ENCODE measurements at regions of chr16 and their contacts with region 1.

Region 1: GRCh38 chr16:66483689-66484481 is 56.8 kb downstream of the BEAN1 start:
- DNase-seq: peak; percentile 42 to 56
- ATAC-seq: peak; percentile 34 to 61
- H3K4me3 ChIP-seq: no peak overlapping the region
- H3K27ac ChIP-seq: no peak overlapping the region
- H3K4me1 ChIP-seq: peaks cover 0 to 2% of the 10 kb centered on the region in 2 donors
- H3K27me3 ChIP-seq: no peaks in the 10 kb centered on the region
- CTCF ChIP-seq: peak; percentile 78 to 95 (median 83)
- POLR2A ChIP-seq: no peak

Region 2: GRCh38 chr16:66058172-66058691 is 425.7 kb before region 1 on chr16:
- in situ Hi-C with region 1: no loop called
- intact Hi-C with region 1: no loop called
- DNase-seq: no peak
- ATAC-seq: no peak
- H3K4me3 ChIP-seq: no peak overlapping the region
- H3K27ac ChIP-seq: no peak overlapping the region
- H3K4me1 ChIP-seq: no peaks in the 10 kb centered on the region
- H3K27me3 ChIP-seq: no peaks in the 10 kb centered on the region
- CTCF ChIP-seq: no peak
- POLR2A ChIP-seq: no peak

Region 3: DNA sequence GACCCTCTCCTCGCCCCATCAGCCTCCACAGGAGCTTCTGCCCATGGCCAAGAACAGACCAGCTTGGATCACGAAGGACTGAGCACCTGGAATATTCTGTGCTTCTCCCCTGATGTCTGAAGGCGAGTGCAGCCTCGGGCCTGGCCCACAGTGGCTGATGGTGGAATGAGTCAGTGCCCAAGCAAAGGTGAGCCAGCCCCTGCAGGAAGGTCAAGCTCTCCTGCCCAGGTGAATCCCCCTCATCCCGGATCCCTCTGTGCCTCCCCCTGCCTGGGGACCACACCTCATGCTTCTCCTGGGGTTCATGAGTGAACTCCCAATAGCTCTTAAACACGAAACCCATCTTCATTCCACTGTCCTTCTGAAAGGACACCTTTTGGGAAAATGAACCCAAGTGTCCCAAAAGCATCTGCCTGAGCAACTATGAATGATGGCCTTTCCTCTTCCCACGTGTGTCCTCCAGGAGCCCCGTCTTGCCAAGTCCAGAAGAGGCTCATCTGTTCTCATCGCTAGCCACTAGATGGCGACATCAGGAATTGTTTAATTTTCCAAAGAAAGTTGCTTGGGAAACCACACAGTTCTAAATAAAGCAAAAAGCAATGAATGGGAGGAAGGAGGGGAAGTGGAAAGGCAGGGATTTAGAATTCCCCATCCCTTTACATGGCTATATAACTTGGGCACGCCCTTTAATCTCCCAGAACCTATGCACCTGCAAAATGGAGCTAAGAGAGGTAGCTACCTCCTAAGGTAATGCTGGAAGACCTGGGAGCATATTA is 126.5 kb before region 1 on chr16:
- in situ Hi-C with region 1: no loop called
- intact Hi-C with region 1: loop called (anchors 2 kb)
- DNase-seq: peak in 1 of 2 donors; percentile 20
- ATAC-seq: peak; percentile 27 to 45
- H3K4me3 ChIP-seq: no peak overlapping the region
- H3K27ac ChIP-seq: peak overlapping the region in 1 of 4 donors; percentile 22
- H3K4me1 ChIP-seq: peaks cover 0 to 3% of the 10 kb centered on the region in 2 donors
- H3K27me3 ChIP-seq: peaks cover 0 to 6% (median 0%) of the 10 kb centered on the region in 3 donors
- CTCF ChIP-seq: peak in 4 of 5 experiments; percentile 35 to 68 (median 54)
- POLR2A ChIP-seq: no peak

Region 4: DNA sequence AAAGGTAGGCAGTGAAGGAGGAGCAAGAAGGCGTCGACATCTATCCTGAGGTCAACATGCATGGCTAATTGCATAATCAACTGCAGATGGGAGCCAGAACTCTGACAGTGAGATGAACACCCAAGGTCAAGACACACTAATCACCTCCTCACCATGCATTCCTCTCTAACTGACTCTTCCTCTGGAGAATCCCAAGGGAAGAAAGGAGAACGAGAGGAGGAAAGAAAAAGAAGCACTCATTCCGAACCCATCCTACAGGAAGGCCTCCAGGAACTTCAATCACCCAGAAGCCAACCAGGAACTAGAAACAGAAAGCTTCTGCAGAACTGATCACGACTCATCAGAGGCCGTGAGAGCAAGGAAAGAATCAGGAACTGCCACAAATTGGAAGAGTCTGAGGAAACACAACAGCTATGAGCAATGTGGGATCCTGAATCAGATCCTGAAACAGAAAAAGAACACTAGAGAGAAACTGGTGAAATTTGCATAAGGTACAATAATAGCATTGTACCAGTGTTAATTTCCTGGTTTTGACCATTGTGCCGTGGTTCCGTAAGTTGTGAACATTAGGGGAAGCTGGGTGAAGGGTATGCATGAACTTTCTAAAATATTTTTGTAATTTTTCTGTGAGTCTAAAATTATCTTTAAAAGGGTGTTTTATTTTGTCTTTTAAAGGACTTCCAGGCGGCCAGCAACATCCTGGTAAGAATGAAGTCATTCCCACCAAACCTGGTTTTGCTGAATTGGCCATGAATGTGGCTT is 66.8 kb before region 1 on chr16:
- in situ Hi-C with region 1: loop called in 2 of 4 experiments (anchors 5 to 10 kb)
- intact Hi-C with region 1: no loop called
- DNase-seq: no peak
- ATAC-seq: no peak
- H3K4me3 ChIP-seq: no peak overlapping the region
- H3K27ac ChIP-seq: no peak overlapping the region
- H3K4me1 ChIP-seq: no peaks in the 10 kb centered on the region
- H3K27me3 ChIP-seq: peaks cover 0 to 2% (median 2%) of the 10 kb centered on the region in 3 donors
- CTCF ChIP-seq: no peak
- POLR2A ChIP-seq: no peak

Region 5: GRCh38 chr16:66588981-66589713 is 105.3 kb after region 1 on chr16:
- in situ Hi-C with region 1: no loop called
- intact Hi-C with region 1: loop called (anchors 5 kb)
- DNase-seq: no peak
- ATAC-seq: no peak
- H3K4me3 ChIP-seq: no peak overlapping the region
- H3K27ac ChIP-seq: no peak overlapping the region
- H3K4me1 ChIP-seq: no peaks in the 10 kb centered on the region
- H3K27me3 ChIP-seq: no peaks in the 10 kb centered on the region
- CTCF ChIP-seq: peak in 4 of 5 experiments; percentile 33 to 51 (median 44)
- POLR2A ChIP-seq: no peak

Region 6: DNA sequence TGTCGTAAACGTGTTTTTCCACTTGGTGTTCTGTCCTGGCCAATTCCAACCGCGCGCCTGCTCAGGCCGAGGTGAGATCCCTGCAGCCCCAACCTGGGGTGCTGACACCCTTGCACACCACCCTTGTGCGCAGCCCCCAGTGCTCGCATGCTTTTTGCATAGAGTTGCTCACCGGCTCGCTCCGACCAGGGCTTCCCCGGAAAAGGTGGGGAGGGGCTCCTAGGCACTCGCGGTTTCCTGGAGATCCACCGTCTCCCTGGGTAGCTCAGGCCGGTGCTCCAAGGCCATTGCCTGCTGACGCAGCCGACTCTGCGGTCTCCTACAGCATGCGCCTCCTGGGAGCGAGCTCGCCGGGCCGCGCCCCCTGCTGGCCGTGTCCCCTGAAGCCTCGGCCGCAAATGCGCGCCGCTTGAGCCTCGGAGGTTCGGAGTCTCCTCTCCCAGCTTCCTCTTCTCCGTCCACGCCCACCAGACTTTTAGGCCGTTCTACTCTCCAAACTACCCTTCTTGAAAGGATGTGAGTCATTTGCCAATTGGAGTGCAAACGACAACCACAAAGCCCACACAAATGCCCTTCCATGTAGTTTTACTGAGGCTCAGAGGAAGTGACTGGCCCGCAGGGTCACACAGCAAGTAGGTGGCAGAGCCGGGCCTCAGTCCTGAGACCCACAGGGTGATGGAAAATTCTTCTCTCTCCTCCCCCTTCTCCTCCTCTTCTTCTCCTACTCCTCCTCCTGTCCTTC is 389.2 kb after region 1 on chr16:
- in situ Hi-C with region 1: no loop called
- intact Hi-C with region 1: loop called (anchors 10 kb)
- DNase-seq: peak; percentile 70 to 80
- ATAC-seq: peak; percentile 85 to 91
- H3K4me3 ChIP-seq: peak overlapping the region; percentile 30 to 55 (median 40)
- H3K27ac ChIP-seq: peak overlapping the region in 2 of 4 donors; percentile 35 to 57
- H3K4me1 ChIP-seq: peaks cover 0 to 6% of the 10 kb centered on the region in 2 donors
- H3K27me3 ChIP-seq: no peaks in the 10 kb centered on the region
- CTCF ChIP-seq: peak; percentile 62 to 94 (median 90)
- POLR2A ChIP-seq: no peak